ENCODE measurements at regions of chr3 and their contacts with region 1.

Region 1: DNA sequence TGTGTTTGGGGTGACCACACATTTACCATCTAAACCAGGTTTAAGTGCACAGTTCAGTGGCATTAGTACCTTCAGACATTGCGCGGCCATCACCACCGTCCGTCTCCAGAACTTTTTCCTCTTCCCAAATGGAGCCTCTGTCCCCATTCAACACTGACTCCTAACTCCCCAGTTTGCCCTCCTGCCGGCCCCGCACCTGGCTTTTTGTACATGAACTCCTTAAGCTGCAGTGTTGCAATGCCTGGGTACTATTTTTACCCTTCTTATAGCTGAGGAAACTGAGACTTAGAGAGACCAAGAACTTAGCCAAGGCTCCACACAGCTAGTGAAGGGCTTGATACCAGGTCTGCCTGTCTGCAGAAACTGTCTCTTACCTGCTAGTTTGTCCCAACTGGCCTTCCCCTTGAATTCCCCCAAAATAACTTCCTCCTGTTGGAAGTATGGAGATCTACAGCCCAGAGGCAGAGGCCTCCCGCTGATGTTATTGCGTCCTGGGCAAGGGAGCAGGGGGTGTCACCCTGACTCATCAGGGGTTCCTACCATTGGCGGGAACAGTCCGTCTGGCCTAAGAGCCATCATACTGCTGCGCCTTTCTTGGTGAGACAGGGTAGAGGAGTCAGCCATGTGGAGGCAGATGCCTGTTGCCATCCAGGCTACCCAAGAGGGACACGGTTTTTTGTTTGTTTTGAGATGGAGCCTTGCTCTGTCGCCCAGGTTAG is 65.6 kb downstream of the GRIP2 start:
- DNase-seq: no peak
- ATAC-seq: no peak
- H3K4me3 ChIP-seq: no peak overlapping the region
- H3K27ac ChIP-seq: no peak overlapping the region
- H3K4me1 ChIP-seq: no peaks in the 10 kb centered on the region
- H3K27me3 ChIP-seq: no peaks in the 10 kb centered on the region; a peak in 1 of 5 replicates
- CTCF ChIP-seq: no peak
- EP300 ChIP-seq: no peak
- POLR2A ChIP-seq: no peak
- RAD21 ChIP-seq: no peak

Region 2: DNA sequence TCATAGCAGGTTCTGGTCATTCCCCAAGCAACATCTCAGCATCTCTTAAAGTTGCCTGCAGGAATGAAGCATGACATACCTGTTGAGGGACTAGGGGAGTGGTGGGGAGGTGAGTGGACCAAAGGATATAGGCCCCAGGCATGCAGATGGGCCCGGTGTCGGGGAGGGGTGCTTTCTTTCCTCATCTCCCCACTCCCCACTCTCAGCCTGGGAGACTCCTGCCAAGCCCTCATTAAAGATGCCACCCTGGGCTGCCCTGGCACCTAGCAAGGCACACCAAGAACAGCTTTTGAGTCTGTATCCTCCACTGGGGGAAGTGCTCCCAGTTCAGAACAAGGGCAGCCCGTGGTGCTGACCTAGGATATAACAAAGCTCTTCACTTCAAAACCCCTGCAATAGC is 11.5 kb after region 1 on chr3:
- CTCF ChIA-PET with region 1: no interaction called
- POLR2A ChIA-PET with region 1: interaction called, 10 read pairs
- in situ Hi-C with region 1: no loop called
- intact Hi-C with region 1: no loop called
- DNase-seq: no peak
- ATAC-seq: no peak
- H3K4me3 ChIP-seq: no peak overlapping the region
- H3K27ac ChIP-seq: no peak overlapping the region
- H3K4me1 ChIP-seq: peaks cover 0 to 11% of the 10 kb centered on the region in 2 experiments; a peak in 2 of 5 replicates
- H3K27me3 ChIP-seq: no peaks in the 10 kb centered on the region
- CTCF ChIP-seq: no peak
- EP300 ChIP-seq: no peak
- POLR2A ChIP-seq: no peak
- RAD21 ChIP-seq: no peak

Region 3: GRCh38 chr3:14623569-14624051 is 149.1 kb after region 1 on chr3:
- CTCF ChIA-PET with region 1: no interaction called
- POLR2A ChIA-PET with region 1: no interaction called
- in situ Hi-C with region 1: no loop called
- intact Hi-C with region 1: no loop called
- DNase-seq: no peak
- ATAC-seq: no peak
- H3K4me3 ChIP-seq: no peak overlapping the region
- H3K27ac ChIP-seq: no peak overlapping the region
- H3K4me1 ChIP-seq: peaks cover 3 to 7% of the 10 kb centered on the region in 2 experiments; a peak in 2 of 5 replicates
- H3K27me3 ChIP-seq: peaks cover 25 to 50% of the 10 kb centered on the region in 2 experiments
- CTCF ChIP-seq: no peak
- EP300 ChIP-seq: no peak
- POLR2A ChIP-seq: no peak
- RAD21 ChIP-seq: no peak

Measured in K562 (cell line).